ENCODE measurements at regions of chr21 and their contacts with region 1.

Region 1: GRCh38 chr21:33374450-33375096 is 28.6 kb upstream of the IFNGR2 start:
- DNase-seq: peak; percentile 58 to 77
- H3K4me3 ChIP-seq: no peak overlapping the region
- H3K27ac ChIP-seq: peak overlapping the region in 3 of 5 donors; percentile 12 to 74 (median 52)
- H3K4me1 ChIP-seq: peaks cover 0 to 25% (median 5%) of the 10 kb centered on the region in 4 donors
- H3K27me3 ChIP-seq: no peaks in the 10 kb centered on the region
- CTCF ChIP-seq: peak in 5 of 7 experiments; percentile 27 to 67 (median 49)
- EP300 ChIP-seq: no peak
- POLR2A ChIP-seq: no peak

Region 2: GRCh38 chr21:33151941-33152731 is 222.4 kb before region 1 on chr21:
- intact Hi-C with region 1: no loop called
- DNase-seq: peak in 1 of 2 donors; percentile 32
- H3K4me3 ChIP-seq: no peak overlapping the region
- H3K27ac ChIP-seq: no peak overlapping the region
- H3K4me1 ChIP-seq: peaks cover 0 to 4% (median 0%) of the 10 kb centered on the region in 4 donors
- H3K27me3 ChIP-seq: peaks cover 0 to 87% (median 0%) of the 10 kb centered on the region in 3 donors
- CTCF ChIP-seq: no peak
- EP300 ChIP-seq: no peak
- POLR2A ChIP-seq: no peak

Region 3: DNA sequence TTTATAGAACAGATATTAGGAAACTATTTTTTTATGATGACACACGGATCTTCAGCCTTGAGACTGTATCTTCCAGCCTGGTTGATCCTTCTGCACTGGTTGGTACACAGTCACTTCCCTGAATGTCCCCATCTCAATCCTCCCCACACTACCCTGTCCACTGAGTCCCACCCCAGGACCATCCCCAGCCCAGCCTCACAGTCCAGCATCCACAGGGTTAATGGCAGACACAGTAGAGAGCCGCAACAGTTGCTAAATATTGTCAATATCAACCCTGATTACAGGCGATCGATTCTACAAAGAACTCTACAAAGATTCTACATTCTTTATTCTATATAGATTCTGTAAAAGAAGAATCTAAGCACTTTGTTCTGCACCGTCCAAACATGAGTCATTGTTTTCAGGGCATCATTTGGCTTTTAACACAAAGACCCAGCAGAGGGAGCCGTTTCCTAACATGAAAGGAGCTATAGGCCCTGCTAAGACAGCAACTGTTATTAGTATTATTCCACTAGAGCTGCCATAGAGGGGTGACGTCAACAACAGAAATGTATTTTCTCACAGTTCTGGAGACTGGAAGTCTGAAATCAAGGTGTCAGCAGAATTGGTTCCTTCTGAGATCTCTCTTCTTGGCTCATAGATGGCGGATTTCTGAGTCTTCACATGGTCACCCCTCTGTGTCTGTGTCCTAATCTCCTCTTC is 174.9 kb before region 1 on chr21:
- intact Hi-C with region 1: loop called (anchors 10 kb)
- DNase-seq: peak; percentile 83 to 97
- H3K4me3 ChIP-seq: no peak overlapping the region
- H3K27ac ChIP-seq: peak overlapping the region in 4 of 5 donors; percentile 5 to 40 (median 32)
- H3K4me1 ChIP-seq: peaks cover 16 to 56% (median 28%) of the 10 kb centered on the region in 4 donors
- H3K27me3 ChIP-seq: no peaks in the 10 kb centered on the region
- CTCF ChIP-seq: peak in 5 of 7 experiments; percentile 59 to 80 (median 67)
- EP300 ChIP-seq: no peak
- POLR2A ChIP-seq: no peak